ENCODE measurements at regions of chr3 and their contacts with region 1.

Region 1: DNA sequence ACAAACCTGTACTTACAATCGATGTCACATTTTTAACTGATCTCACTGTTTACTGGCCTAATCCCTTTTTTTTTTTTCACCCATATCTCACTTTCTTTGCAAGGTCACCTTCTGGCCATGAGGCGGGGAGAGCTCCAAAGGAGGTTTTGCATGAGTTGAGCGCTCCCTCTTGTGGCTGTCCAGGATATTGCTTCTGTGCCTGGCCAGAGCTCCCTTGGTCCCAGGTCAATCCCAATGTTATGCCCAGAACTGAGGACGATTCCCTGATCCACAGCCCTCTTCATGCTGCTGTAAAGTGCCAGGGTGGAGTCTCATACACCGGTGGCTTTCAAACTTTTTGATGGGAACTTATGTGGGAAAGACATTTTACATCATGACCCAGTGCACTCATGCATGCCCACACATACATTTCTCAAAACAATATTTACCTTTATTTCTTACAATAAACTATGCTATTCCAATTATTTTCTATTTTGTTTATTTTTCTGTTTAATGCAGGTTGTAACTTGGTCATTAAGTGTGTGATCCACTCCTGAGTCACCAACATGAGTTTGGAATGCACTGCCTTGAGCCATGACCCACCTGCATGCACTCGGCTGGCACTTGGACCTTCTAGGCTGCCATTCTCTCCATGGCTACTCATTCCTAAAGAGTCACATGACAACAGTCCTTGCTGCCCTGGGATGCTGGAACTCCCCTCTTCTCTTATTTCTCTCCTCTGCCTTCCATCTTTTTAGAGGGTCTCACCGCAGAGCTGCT is 9.6 kb upstream of the SST start:
- DNase-seq: peak; percentile 78

Region 2: GRCh38 chr3:187210545-187211327 is 469.1 kb before region 1 on chr3:
- in situ Hi-C with region 1: loop called (anchors 25 kb)
- DNase-seq: no peak

Region 3: GRCh38 chr3:188205992-188206416 is 526.2 kb after region 1 on chr3:
- in situ Hi-C with region 1: no loop called
- DNase-seq: no peak

Measured in KBM-7 (cell line).